T-cell (primary cell): ENCODE measurements at regions of chr3 and their contacts with region 1.

Region 1: DNA sequence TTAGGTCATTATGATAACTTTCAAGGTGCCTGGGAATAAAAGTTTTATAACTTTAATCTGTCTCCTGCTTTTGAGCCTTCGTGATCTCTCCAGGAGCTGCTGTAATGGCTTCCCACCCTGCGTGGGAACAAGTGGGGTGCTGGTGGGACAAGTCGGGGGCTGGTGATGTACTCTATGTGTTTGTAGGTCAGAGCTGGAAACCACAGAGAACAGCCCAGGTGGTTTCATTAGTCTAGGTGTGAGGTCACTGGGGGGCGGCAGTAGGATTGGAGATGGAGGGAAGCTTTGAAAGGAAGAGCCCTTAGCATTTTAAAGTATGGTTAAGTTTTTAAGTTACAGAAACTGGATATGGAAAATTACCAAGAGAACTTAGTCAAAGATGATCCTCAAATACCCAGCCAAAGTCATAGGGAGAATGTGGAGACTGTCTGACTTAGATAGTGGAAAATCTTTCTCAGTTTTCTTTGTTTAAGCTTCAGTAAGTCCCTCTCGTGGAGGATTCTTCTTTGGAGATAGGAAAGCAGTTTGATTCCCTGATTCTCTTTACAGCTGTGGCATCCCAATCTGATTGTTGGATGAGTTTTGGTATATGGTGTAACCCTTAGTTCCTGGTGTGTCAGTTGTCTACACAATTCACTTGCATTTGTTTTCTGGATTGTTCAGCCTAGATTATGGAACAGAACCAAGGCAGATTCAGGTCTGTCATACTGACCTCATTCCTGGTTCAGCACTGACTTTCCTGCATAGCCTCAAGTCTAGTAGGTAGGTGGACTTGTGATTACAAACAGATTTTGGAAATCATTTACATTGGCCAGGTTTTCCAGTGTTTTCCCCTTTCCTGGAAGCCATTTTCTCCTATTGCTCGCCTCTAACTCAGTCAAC is 115.6 kb downstream of the FNDC3B start:
- DNase-seq: no peak
- ATAC-seq: no peak
- H3K4me3 ChIP-seq: no peak overlapping the region
- H3K4me3 Mint-ChIP-seq: no peak overlapping the region
- H3K27ac ChIP-seq: no peak overlapping the region
- H3K27ac Mint-ChIP-seq: no peak overlapping the region
- H3K4me1 ChIP-seq: peaks cover 2 to 12% of the 10 kb centered on the region in 2 experiments
- H3K4me1 Mint-ChIP-seq: peaks cover 31 to 46% (median 41%) of the 10 kb centered on the region in 3 donors
- H3K27me3 ChIP-seq: peaks cover 0 to 2% of the 10 kb centered on the region in 2 experiments
- H3K27me3 Mint-ChIP-seq: no peaks in the 10 kb centered on the region

Region 2: GRCh38 chr3:172039436-172040077 is 115.5 kb before region 1 on chr3 and contains the start of gene FNDC3B:
- CTCF ChIA-PET with region 1: interaction called, 5 to 11 read pairs
- POLR2A ChIA-PET with region 1: no interaction called
- DNase-seq: peak; percentile 80 to 96 (median 90)
- ATAC-seq: peak; percentile 94 to 95 (median 94)
- H3K4me3 ChIP-seq: peak within 1 kb of the TSS; percentile 81 to 91
- H3K4me3 Mint-ChIP-seq: peak within 1 kb of the TSS; percentile 95 to 99 (median 98)
- H3K27ac ChIP-seq: peak within 1 kb of the TSS; percentile 76
- H3K27ac Mint-ChIP-seq: peak within 1 kb of the TSS; percentile 90 to 94
- H3K4me1 ChIP-seq: peaks cover 2 to 27% of the 10 kb centered on the region in 2 experiments
- H3K4me1 Mint-ChIP-seq: peaks cover 47 to 64% (median 51%) of the 10 kb centered on the region in 3 donors
- H3K27me3 ChIP-seq: no peaks in the 10 kb centered on the region
- H3K27me3 Mint-ChIP-seq: no peaks in the 10 kb centered on the region
- total RNA-seq, gene FNDC3B: 18.1 to 46.5 (median 23.5) TPM